ENCODE measurements at regions of chr12 and their contacts with region 1.

Region 1: DNA sequence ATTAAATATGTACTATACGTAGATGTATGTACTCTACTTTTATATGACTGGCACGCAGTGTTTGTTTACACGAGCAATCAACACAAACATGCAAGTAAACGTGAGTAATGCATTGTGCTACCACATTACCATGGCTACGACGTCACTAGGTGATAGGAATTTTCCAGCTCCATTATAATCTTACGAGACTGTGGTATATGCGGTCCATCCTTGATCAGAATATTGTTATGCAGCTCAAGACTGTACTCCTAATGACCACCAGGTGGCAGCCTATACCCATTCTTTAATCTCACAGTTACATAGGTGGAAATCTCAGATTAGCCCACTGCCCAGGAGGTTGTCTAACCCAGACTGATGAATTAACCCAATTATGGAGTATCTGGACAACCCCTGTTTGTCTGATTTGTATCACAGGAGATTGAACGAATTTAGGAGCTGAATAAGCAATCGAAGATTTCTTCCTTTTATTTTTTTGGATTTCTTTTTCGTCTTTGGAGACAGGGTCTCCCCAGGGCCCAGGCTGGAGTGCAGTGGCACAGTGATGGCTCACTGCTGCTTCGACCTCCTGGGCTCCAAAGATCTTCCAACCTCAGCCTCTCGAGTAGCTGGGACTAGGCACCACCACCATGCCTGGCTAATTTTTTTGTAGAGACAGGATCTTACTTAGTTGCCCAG is 8.7 kb upstream of the TESPA1 start:
- DNase-seq: peak; percentile 72
- H3K4me3 ChIP-seq: no peak overlapping the region
- H3K27ac ChIP-seq: no peak overlapping the region
- H3K4me1 ChIP-seq: no peaks in the 10 kb centered on the region
- H3K27me3 ChIP-seq: peaks cover 3 to 4% of the 10 kb centered on the region in 2 experiments
- CTCF ChIP-seq: peak; percentile 59 to 64
- POLR2A ChIP-seq: no peak

Region 2: DNA sequence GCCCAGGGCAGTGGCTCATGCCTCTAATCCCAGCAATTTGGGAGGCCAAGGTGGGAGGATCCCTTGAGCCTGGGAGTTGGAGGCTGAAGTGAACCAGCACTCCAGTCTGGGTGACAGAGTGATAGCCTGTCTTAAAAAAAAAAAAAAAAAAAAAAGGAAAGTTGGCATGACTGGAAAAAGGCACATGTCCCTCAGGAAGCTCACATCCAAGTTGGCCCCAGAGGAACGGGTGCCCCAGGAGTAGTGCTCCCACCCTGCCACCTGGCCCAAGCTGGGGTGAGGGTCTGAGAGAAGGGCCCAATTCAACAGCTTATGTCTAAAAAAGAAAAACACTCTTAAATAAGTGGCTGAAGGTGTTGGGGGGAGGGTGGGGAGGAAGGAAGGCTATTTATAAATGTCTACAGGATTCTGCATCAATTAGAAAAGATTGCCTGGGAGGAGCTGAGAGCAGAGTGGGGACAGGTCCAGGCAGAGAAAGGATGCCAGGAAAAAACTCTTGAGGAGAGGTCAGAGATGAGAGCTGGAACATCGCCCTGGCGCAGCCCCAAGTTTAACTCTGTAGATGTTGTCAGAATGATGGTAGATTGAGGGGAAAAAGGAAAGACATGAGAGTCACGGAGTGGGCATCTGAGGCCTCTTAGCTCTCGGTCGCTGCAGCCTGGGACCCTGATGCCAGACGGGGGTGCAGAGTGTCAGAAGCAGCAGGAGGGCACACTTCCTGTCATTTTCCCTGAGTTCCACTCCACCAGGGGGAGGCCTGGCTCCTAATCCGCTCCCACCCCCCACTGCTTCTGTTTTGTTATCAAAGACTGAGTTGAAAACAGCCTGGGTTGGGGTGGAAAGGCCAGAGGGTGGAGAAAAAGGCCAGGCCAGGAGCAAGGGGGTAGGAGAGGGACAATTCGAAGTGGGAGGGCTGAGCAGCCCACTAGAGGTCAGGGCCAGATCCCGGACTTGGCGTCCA is 1921.4 kb before region 1 on chr12:
- CTCF ChIA-PET with region 1: no interaction called
- POLR2A ChIA-PET with region 1: no interaction called
- dilution Hi-C with region 1: no loop called
- intact Hi-C with region 1: no loop called
- DNase-seq: peak; percentile 35
- H3K4me3 ChIP-seq: no peak overlapping the region
- H3K27ac ChIP-seq: no peak overlapping the region
- H3K4me1 ChIP-seq: peaks cover 29% of the 10 kb centered on the region
- H3K27me3 ChIP-seq: no peaks in the 10 kb centered on the region
- CTCF ChIP-seq: peak in 1 of 2 donors; percentile 26
- POLR2A ChIP-seq: no peak

Region 3: GRCh38 chr12:55008944-55009585 is 15.8 kb after region 1 on chr12:
- CTCF ChIA-PET with region 1: interaction called, 18 read pairs
- POLR2A ChIA-PET with region 1: no interaction called
- dilution Hi-C with region 1: no loop called
- intact Hi-C with region 1: no loop called
- DNase-seq: no peak
- H3K4me3 ChIP-seq: no peak overlapping the region
- H3K27ac ChIP-seq: no peak overlapping the region
- H3K4me1 ChIP-seq: no peaks in the 10 kb centered on the region
- H3K27me3 ChIP-seq: no peaks in the 10 kb centered on the region
- CTCF ChIP-seq: no peak
- POLR2A ChIP-seq: no peak

Region 4: GRCh38 chr12:55049676-55050075 is 56.4 kb after region 1 on chr12:
- CTCF ChIA-PET with region 1: interaction called, 14 read pairs
- POLR2A ChIA-PET with region 1: no interaction called
- dilution Hi-C with region 1: no loop called
- intact Hi-C with region 1: no loop called
- DNase-seq: no peak
- H3K4me3 ChIP-seq: no peak overlapping the region
- H3K27ac ChIP-seq: no peak overlapping the region
- H3K4me1 ChIP-seq: no peaks in the 10 kb centered on the region
- H3K27me3 ChIP-seq: no peaks in the 10 kb centered on the region
- CTCF ChIP-seq: no peak
- POLR2A ChIP-seq: no peak

Region 5: GRCh38 chr12:55142669-55143565 is 149.6 kb after region 1 on chr12:
- CTCF ChIA-PET with region 1: interaction called, 28 read pairs
- POLR2A ChIA-PET with region 1: no interaction called
- dilution Hi-C with region 1: no loop called
- intact Hi-C with region 1: loop called (anchors 1 kb)
- DNase-seq: peak; percentile 47
- H3K4me3 ChIP-seq: no peak overlapping the region
- H3K27ac ChIP-seq: no peak overlapping the region
- H3K4me1 ChIP-seq: no peaks in the 10 kb centered on the region
- H3K27me3 ChIP-seq: no peaks in the 10 kb centered on the region
- CTCF ChIP-seq: peak; percentile 56 to 60
- POLR2A ChIP-seq: no peak